CD8-positive, alpha-beta memory T cell (primary cell): ENCODE measurements at regions of chr14 and their contacts with region 1.

Region 1: GRCh38 chr14:75968456-75968855 is 13.3 kb downstream of the TGFB3 start:
- DNase-seq: no peak
- H3K4me3 ChIP-seq: no peak overlapping the region
- H3K4me3 Mint-ChIP-seq: no peak overlapping the region
- H3K27ac ChIP-seq: no peak overlapping the region
- H3K27ac Mint-ChIP-seq: no peak overlapping the region
- H3K4me1 ChIP-seq: no peaks in the 10 kb centered on the region
- H3K4me1 Mint-ChIP-seq: no peaks in the 10 kb centered on the region
- H3K27me3 ChIP-seq: no peaks in the 10 kb centered on the region
- H3K27me3 Mint-ChIP-seq: no peaks in the 10 kb centered on the region

Region 2: GRCh38 chr14:74426202-74426582 is 1542.3 kb before region 1 on chr14 and contains the start of gene SYNDIG1L:
- CTCF ChIA-PET with region 1: no interaction called
- POLR2A ChIA-PET with region 1: interaction called, 12 read pairs
- DNase-seq: no peak
- H3K4me3 ChIP-seq: no peak within 1 kb of the TSS
- H3K4me3 Mint-ChIP-seq: peak within 1 kb of the TSS in 5 of 7 donors; percentile 39 to 72 (median 53)
- H3K27ac ChIP-seq: no peak within 1 kb of the TSS
- H3K27ac Mint-ChIP-seq: peak within 1 kb of the TSS in 1 of 8 donors; percentile 32
- H3K4me1 ChIP-seq: no peaks in the 10 kb centered on the region
- H3K4me1 Mint-ChIP-seq: peaks cover 3 to 4% (median 4%) of the 10 kb centered on the region in 3 donors
- H3K27me3 ChIP-seq: peaks cover 18% of the 10 kb centered on the region
- H3K27me3 Mint-ChIP-seq: peaks cover 46 to 82% of the 10 kb centered on the region in 2 donors
- total RNA-seq, gene SYNDIG1L: not detected

Region 3: DNA sequence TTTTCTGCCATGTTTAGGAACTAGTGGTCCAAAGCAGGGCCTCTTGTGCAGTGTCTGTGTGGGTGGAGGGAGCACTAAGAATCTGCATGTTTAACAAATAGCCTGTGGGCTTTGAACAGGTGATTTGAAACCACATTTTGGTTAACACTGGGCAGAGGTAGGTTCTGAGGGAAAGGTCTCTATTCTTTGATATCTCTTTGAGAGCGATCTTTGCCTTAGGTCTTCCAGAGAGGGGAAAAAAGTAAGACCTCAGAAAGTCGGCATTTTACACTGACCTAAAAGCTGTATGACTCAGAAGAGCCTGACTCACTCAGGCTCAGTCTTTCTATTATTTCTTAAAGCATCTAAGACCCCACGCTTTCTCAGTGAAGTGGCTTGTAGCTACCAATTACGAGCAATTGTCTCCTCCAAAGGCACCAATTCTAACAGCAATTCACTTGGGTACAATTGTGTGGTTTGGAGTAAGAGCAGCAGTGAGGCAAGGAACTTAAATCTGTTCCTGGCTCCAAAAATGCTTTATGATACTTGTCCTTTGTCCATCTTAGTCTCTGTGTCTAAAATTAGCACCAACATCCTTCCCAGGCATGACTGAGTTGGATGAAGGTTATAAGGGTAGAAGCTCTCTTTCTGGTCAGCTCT is 957.0 kb before region 1 on chr14:
- CTCF ChIA-PET with region 1: no interaction called
- POLR2A ChIA-PET with region 1: no interaction called
- DNase-seq: no peak
- H3K4me3 ChIP-seq: no peak overlapping the region
- H3K4me3 Mint-ChIP-seq: peak overlapping the region in 1 of 7 donors; percentile 1
- H3K27ac ChIP-seq: no peak overlapping the region
- H3K27ac Mint-ChIP-seq: peak overlapping the region; percentile 18 to 89 (median 63)
- H3K4me1 ChIP-seq: no peaks in the 10 kb centered on the region
- H3K4me1 Mint-ChIP-seq: peaks cover 20 to 35% (median 28%) of the 10 kb centered on the region in 3 donors
- H3K27me3 ChIP-seq: no peaks in the 10 kb centered on the region
- H3K27me3 Mint-ChIP-seq: no peaks in the 10 kb centered on the region

Region 4: DNA sequence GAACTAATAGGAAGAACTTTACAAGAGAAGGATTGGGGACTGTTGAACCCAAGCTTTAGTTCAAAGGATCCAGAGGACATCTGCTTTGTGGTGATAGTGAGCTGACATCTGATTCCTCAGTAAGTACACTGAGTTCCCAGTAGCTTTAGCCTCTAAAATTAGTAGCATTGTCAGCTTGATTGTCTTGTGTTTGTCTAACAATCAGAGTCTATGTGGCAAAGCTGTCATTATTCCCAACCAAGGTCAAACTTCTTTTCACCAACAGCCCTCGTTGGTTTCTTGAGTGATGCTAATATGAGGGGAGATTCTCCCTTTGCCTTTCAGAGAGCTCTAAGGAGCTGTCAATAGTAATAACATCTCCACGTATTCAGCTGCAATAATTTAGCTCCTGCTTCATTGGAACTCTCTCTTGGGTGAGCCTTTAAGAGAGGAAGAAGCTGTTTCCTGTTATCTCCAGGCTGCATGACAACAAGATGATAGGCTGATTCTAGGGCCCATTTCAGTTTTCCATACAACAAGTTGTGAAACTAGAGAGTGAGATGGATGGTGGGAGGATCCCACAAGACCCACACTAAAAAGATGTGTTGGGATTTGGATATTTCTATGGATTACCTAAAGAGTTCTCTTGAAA is 33.3 kb before region 1 on chr14:
- CTCF ChIA-PET with region 1: no interaction called
- POLR2A ChIA-PET with region 1: no interaction called
- DNase-seq: no peak
- H3K4me3 ChIP-seq: no peak overlapping the region
- H3K4me3 Mint-ChIP-seq: no peak overlapping the region
- H3K27ac ChIP-seq: no peak overlapping the region
- H3K27ac Mint-ChIP-seq: no peak overlapping the region
- H3K4me1 ChIP-seq: no peaks in the 10 kb centered on the region
- H3K4me1 Mint-ChIP-seq: no peaks in the 10 kb centered on the region
- H3K27me3 ChIP-seq: no peaks in the 10 kb centered on the region
- H3K27me3 Mint-ChIP-seq: no peaks in the 10 kb centered on the region

Region 5: GRCh38 chr14:75989134-75989533 is 20.7 kb after region 1 on chr14:
- CTCF ChIA-PET with region 1: no interaction called
- POLR2A ChIA-PET with region 1: no interaction called
- DNase-seq: no peak
- H3K4me3 ChIP-seq: no peak overlapping the region
- H3K4me3 Mint-ChIP-seq: peak overlapping the region in 1 of 7 donors; percentile 53
- H3K27ac ChIP-seq: no peak overlapping the region
- H3K27ac Mint-ChIP-seq: peak overlapping the region in 1 of 8 donors; percentile 74
- H3K4me1 ChIP-seq: peaks cover 12% of the 10 kb centered on the region
- H3K4me1 Mint-ChIP-seq: peaks cover 10 to 19% (median 19%) of the 10 kb centered on the region in 3 donors
- H3K27me3 ChIP-seq: no peaks in the 10 kb centered on the region
- H3K27me3 Mint-ChIP-seq: peaks cover 0 to 2% of the 10 kb centered on the region in 2 donors

Region 6: GRCh38 chr14:76090616-76091391 is 122.3 kb after region 1 on chr14:
- CTCF ChIA-PET with region 1: no interaction called
- POLR2A ChIA-PET with region 1: no interaction called
- DNase-seq: no peak
- H3K4me3 ChIP-seq: no peak overlapping the region
- H3K4me3 Mint-ChIP-seq: no peak overlapping the region
- H3K27ac ChIP-seq: no peak overlapping the region
- H3K27ac Mint-ChIP-seq: no peak overlapping the region
- H3K4me1 ChIP-seq: no peaks in the 10 kb centered on the region
- H3K4me1 Mint-ChIP-seq: no peaks in the 10 kb centered on the region
- H3K27me3 ChIP-seq: no peaks in the 10 kb centered on the region
- H3K27me3 Mint-ChIP-seq: no peaks in the 10 kb centered on the region